Activated CD8-positive, alpha-beta T cell treated with anti-CD3 and anti-CD28 coated beads for 36 hours (primary cell): ENCODE measurements at regions of chr11 and their contacts with region 1.

Region 1: DNA sequence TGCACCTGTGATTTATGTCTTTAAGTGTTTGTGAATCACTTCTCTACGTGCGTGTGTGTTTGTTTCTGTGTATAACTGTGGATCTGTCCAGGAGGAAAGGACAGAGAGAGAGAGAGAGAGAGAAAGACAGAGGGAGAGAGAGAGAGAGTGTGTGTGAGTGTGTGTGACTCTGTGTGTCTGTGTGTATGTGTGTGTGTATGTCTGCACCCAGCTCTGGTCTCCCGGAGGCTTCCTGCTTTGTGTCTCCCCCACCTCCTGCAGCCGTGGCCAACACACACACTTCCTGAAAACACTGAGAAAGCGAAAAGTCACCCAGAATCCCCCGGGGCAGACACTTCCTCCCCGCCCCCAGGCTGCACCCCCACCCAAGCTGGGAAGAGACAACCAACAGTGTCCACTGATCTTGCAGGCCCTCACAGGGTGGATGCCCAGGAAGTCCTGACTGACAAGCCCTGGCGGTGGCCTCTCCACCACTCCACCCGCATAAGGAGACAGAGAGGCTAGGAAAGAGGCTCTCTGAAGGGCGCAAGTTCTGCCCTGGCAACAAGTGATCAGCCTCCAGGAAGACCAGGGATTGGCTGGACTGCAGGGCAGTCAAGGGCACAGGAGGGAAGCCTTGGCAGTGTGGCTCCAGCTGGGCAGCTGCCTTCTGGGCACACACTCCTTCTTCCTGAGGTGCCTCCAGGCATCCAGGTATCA is 30.0 kb downstream of the ARAP1 start:
- DNase-seq: peak; percentile 91
- ATAC-seq: peak; percentile 90
- H3K4me3 Mint-ChIP-seq: peak overlapping the region; percentile 92
- H3K27ac Mint-ChIP-seq: peak overlapping the region; percentile 95
- H3K4me1 Mint-ChIP-seq: peaks cover 44% of the 10 kb centered on the region
- H3K27me3 Mint-ChIP-seq: no peaks in the 10 kb centered on the region
- CTCF ChIP-seq: no peak

Region 2: DNA sequence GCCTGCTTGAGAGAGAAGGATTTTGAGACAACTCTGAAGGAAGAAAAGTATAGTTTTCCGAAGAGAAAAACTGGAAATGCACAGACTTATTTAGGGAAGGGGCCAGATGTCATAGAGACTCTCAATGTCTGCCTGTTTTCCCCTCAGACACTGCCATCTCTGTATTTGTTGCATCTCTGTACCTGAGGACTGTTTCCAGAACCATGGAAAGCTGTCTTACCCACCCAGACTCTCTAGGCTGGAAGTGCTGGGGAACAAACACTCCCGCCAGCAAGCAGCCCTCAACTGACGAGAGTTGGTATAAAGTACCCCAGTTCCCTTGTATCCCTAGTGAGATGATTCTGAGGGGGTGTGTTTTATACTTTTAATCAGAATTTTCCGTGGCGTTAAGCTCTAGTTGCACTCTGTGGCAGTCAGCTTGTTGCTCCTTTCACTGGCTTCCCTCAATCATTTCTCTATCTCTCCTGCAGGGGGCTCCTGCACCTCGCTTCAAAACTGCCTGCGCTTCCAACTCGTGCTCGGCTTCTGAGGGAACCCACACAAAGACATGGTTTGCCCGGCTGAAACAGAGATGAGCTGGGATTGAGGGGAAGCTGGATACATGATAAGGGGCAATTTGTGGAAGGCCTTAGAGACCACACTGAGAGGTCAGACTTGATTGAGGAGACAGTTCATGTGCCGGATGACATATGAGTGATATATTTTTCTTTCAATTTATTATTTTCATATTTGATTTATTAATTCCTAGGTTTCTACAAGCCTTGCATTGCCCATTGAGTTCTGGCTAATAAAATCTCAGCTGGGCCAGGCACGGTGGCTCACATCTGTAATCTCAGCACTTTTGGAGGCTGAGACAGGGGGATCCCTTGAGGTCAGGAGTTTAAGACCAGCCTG is 250.9 kb before region 1 on chr11:
- CTCF ChIA-PET with region 1: no interaction called
- POLR2A ChIA-PET with region 1: no interaction called
- intact Hi-C with region 1: no loop called
- DNase-seq: peak; percentile 68
- ATAC-seq: peak; percentile 96
- H3K4me3 Mint-ChIP-seq: peak overlapping the region; percentile 15
- H3K27ac Mint-ChIP-seq: no peak overlapping the region
- H3K4me1 Mint-ChIP-seq: peaks cover 2% of the 10 kb centered on the region
- H3K27me3 Mint-ChIP-seq: peaks cover 19% of the 10 kb centered on the region
- CTCF ChIP-seq: peak; percentile 66

Region 3: DNA sequence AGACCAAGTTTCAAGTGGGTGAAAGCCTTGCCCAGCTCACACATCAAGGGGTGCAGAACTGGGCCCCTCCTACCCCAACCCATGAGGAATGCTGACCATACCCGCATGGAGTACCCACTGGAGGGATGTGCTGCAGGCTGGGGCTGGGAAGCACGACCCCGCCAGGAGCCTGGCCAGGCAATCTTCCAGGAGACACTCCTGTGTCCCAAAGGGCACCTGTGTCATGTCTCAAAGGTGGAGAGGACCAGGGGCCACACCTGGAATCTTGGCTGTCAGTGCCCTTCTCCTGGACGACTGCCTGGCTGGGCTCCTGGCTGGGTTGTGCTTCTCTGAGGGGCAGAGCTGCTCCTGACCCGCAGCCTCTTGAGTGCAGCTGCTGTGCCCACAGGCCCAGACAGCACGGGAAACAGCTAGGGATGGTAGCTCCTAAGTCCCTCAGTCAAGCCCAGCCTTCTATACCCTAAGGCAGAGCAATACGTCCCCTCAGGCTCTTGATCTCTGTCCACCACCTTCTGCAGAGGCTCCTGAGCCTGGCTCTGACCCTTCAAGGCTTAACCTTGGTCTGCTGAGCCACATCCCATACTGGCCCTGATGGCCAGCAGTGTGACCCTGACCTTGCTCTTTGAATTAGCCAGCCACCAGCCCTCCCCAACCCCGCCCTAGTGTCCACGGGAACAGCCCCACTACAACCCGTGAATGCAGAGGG is 23.5 kb after region 1 on chr11:
- CTCF ChIA-PET with region 1: interaction called, 14 read pairs
- POLR2A ChIA-PET with region 1: interaction called, 5 read pairs
- intact Hi-C with region 1: no loop called
- DNase-seq: no peak
- ATAC-seq: no peak
- H3K4me3 Mint-ChIP-seq: no peak overlapping the region
- H3K27ac Mint-ChIP-seq: no peak overlapping the region
- H3K4me1 Mint-ChIP-seq: peaks cover 51% of the 10 kb centered on the region
- H3K27me3 Mint-ChIP-seq: no peaks in the 10 kb centered on the region
- CTCF ChIP-seq: no peak

Region 4: DNA sequence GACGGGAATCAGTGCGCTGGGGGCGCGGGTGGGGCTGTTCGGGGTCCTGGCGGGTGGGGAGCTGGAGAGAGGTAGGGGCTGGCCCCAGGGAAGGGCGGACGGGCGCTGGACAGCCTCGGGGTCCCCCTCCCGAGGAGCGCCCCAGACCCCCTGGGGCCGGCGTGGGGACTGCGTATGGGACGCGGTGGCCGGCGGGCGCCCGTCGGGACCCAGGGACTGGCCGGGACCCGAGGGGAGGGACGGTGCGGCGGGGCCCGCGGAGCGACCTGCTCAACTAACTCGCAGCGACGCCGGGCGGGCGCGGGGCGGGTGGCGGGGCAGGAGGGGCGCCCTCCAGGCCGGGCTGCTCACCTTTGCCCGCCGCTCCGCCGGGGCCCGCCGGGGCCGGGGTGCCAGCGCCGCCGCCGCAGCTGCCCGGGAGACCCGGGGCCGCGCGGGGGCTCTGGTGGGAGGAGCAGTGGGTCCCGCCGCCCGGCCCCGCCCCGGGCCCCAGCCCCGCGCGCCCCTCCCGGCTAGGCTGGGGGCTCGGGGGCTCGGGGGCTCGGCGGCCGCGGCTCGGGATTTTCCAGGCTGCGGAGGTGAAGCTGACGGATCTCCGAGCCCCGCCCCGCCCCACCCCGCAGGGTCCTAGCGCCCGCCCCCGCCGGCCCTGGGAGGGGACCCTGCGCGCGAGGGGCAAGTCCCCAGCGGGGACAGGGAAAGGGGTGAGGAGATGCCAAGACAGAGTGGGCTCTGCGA is 59.3 kb after region 1 on chr11:
- CTCF ChIA-PET with region 1: interaction called, 24 read pairs
- POLR2A ChIA-PET with region 1: interaction called, 3 read pairs
- intact Hi-C with region 1: no loop called
- DNase-seq: peak; percentile 57
- ATAC-seq: peak; percentile 75
- H3K4me3 Mint-ChIP-seq: peak overlapping the region; percentile 64
- H3K27ac Mint-ChIP-seq: no peak overlapping the region
- H3K4me1 Mint-ChIP-seq: peaks cover 18% of the 10 kb centered on the region
- H3K27me3 Mint-ChIP-seq: no peaks in the 10 kb centered on the region
- CTCF ChIP-seq: no peak

Region 5: DNA sequence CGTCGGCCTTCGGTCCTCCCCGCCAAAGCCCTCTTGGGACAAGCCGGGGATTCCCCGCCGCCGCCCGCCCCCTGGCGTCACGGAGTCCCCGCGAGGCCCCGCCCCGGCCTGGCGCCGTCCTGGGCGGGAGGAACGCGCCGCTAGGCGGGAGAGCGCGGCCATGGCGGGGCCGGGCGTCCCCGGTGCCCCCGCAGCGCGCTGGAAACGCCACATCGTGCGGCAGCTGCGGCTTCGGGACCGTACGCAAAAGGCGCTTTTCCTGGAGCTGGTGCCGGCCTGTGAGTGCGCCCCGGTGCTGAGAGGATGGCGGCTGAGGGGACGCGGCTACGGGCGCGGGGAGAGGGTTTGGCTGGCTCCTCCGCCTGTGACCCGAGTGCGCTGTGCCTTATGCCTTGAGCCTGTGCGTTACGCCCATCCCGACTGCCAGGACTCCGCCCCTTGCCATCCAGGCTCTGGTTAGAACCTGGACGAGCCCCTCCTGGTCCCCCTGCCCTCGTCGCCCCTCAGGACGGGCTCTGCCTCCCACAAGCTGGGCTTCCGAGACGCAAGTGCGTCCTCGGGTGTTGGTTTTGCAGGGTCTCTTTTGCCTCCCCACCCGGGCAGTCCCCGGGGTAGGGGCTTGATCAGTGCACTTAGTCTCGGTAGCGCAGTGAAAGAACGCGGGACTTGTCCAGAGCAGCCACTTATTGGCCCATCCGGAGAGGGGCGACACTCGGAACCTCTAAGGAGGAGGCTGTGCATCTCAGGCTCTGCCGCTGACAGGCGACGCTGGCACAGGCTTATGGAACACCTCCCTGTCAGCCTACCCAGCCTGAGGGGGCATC is 92.3 kb after region 1 on chr11 and contains the start of gene ATG16L2:
- CTCF ChIA-PET with region 1: interaction called, 74 read pairs
- POLR2A ChIA-PET with region 1: interaction called, 43 read pairs
- intact Hi-C with region 1: no loop called
- DNase-seq: peak; percentile 89
- ATAC-seq: peak; percentile 68
- H3K4me3 Mint-ChIP-seq: peak within 1 kb of the TSS; percentile 97
- H3K27ac Mint-ChIP-seq: peak within 1 kb of the TSS; percentile 98
- H3K4me1 Mint-ChIP-seq: peaks cover 28% of the 10 kb centered on the region
- H3K27me3 Mint-ChIP-seq: no peaks in the 10 kb centered on the region
- CTCF ChIP-seq: peak; percentile 5
- total RNA-seq, gene ATG16L2: 70.8 to 71.4 TPM

Region 6: GRCh38 chr11:72840780-72841179 is 118.6 kb after region 1 on chr11:
- CTCF ChIA-PET with region 1: interaction called, 19 read pairs
- POLR2A ChIA-PET with region 1: no interaction called
- intact Hi-C with region 1: no loop called
- DNase-seq: no peak
- ATAC-seq: no peak
- H3K4me3 Mint-ChIP-seq: no peak overlapping the region
- H3K27ac Mint-ChIP-seq: no peak overlapping the region
- H3K4me1 Mint-ChIP-seq: no peaks in the 10 kb centered on the region
- H3K27me3 Mint-ChIP-seq: no peaks in the 10 kb centered on the region
- CTCF ChIP-seq: no peak